Activated CD4-positive, alpha-beta T cell treated with anti-CD3 and anti-CD28 coated beads for 36 hours (primary cell): ENCODE measurements at regions of chr2 and their contacts with region 1.

Region 1: GRCh38 chr2:102418421-102418961 is 4.5 kb upstream of the IL18RAP start:
- DNase-seq: no peak
- ATAC-seq: peak; percentile 61
- H3K4me3 Mint-ChIP-seq: peak overlapping the region; percentile 70
- H3K27ac Mint-ChIP-seq: peak overlapping the region; percentile 90
- H3K4me1 Mint-ChIP-seq: peaks cover 57% of the 10 kb centered on the region
- H3K27me3 Mint-ChIP-seq: peaks cover 7% of the 10 kb centered on the region

Region 2: GRCh38 chr2:102005989-102006885 is 412.3 kb before region 1 on chr2:
- CTCF ChIA-PET with region 1: no interaction called
- POLR2A ChIA-PET with region 1: no interaction called
- intact Hi-C with region 1: loop called in 1 of 2 experiments (anchors 2 kb)
- DNase-seq: peak; percentile 67
- ATAC-seq: peak; percentile 27
- H3K4me3 Mint-ChIP-seq: peak overlapping the region; percentile 5
- H3K27ac Mint-ChIP-seq: peak overlapping the region; percentile 77
- H3K4me1 Mint-ChIP-seq: peaks cover 16% of the 10 kb centered on the region
- H3K27me3 Mint-ChIP-seq: no peaks in the 10 kb centered on the region

Region 3: GRCh38 chr2:102258386-102259074 is 160.0 kb before region 1 on chr2:
- CTCF ChIA-PET with region 1: interaction called, 3 read pairs
- POLR2A ChIA-PET with region 1: no interaction called
- intact Hi-C with region 1: loop called in 1 of 2 experiments (anchors 1 kb)
- DNase-seq: peak; percentile 63
- ATAC-seq: peak; percentile 92
- H3K4me3 Mint-ChIP-seq: peak overlapping the region; percentile 26
- H3K27ac Mint-ChIP-seq: peak overlapping the region; percentile 97
- H3K4me1 Mint-ChIP-seq: peaks cover 45% of the 10 kb centered on the region
- H3K27me3 Mint-ChIP-seq: no peaks in the 10 kb centered on the region

Region 4: DNA sequence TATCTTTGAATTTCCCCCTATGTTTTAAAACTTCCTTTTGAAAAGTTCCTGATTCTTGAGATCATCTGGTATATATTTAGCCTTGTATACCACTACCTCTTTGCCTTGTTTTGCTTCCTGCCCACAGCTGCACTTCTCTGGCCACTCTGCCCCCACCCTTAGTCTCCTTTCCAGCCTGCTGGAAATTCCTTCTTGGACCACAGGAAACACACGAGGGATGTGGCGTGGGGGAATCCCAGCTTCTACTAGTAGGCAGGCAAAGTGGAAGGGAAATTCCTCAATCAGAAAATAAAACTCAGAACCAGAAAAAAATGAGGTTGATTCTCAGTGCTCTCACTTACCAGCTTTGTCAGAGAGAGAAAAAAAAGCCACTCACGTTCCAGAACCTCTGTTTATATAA is 17.8 kb after region 1 on chr2:
- CTCF ChIA-PET with region 1: interaction called, 6 read pairs
- POLR2A ChIA-PET with region 1: no interaction called
- intact Hi-C with region 1: loop called in 1 of 2 experiments (anchors 1 kb)
- DNase-seq: peak; percentile 38
- ATAC-seq: no peak
- H3K4me3 Mint-ChIP-seq: no peak overlapping the region
- H3K27ac Mint-ChIP-seq: peak overlapping the region; percentile 71
- H3K4me1 Mint-ChIP-seq: peaks cover 30% of the 10 kb centered on the region
- H3K27me3 Mint-ChIP-seq: no peaks in the 10 kb centered on the region